ENCODE measurements at regions of chr2 and their contacts with region 1.

Region 1: DNA sequence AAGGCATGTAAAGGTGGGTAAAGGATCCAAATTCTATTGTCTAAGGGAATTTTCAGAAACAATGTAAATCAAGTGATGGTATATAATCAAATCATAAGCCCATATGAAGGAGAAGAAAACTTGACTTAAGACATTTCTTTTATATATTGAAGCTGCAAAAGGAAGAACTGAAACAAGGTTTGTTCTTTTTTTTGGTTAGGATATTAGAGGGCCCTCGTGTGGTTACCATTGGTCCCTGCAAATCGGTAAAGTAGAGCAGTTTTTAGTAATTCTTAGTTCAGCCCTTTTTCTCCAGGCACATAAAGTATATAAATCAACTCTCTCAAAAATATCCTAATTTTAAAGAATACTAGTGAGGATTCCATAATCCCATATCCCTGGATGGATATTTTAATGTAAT is 105.6 kb upstream of the STK17B start:
- DNase-seq: no peak
- ATAC-seq: peak; percentile 70
- H3K4me3 ChIP-seq: no peak overlapping the region
- H3K27ac ChIP-seq: no peak overlapping the region
- H3K4me1 ChIP-seq: no peaks in the 10 kb centered on the region
- H3K27me3 ChIP-seq: no peaks in the 10 kb centered on the region
- CTCF ChIP-seq: peak; percentile 65 to 74 (median 66); a peak in 5 of 6 replicates
- POLR2A ChIP-seq: no peak
- RAD21 ChIP-seq: peak; percentile 81

Region 2: GRCh38 chr2:195117011-195117410 is 1160.0 kb before region 1 on chr2:
- CTCF ChIA-PET with region 1: no interaction called
- POLR2A ChIA-PET with region 1: no interaction called
- RAD21 ChIA-PET with region 1: no interaction called
- intact Hi-C with region 1: no loop called
- DNase-seq: no peak
- ATAC-seq: no peak
- H3K4me3 ChIP-seq: no peak overlapping the region
- H3K27ac ChIP-seq: no peak overlapping the region
- H3K4me1 ChIP-seq: no peaks in the 10 kb centered on the region
- H3K27me3 ChIP-seq: no peaks in the 10 kb centered on the region
- CTCF ChIP-seq: no peak
- POLR2A ChIP-seq: no peak
- RAD21 ChIP-seq: no peak

Region 3: GRCh38 chr2:195559431-195559914 is 717.5 kb before region 1 on chr2:
- CTCF ChIA-PET with region 1: no interaction called
- POLR2A ChIA-PET with region 1: no interaction called
- RAD21 ChIA-PET with region 1: no interaction called
- intact Hi-C with region 1: no loop called
- DNase-seq: no peak
- ATAC-seq: no peak
- H3K4me3 ChIP-seq: no peak overlapping the region
- H3K27ac ChIP-seq: no peak overlapping the region
- H3K4me1 ChIP-seq: no peaks in the 10 kb centered on the region
- H3K27me3 ChIP-seq: no peaks in the 10 kb centered on the region
- CTCF ChIP-seq: no peak
- POLR2A ChIP-seq: no peak
- RAD21 ChIP-seq: no peak

Region 4: GRCh38 chr2:195903956-195904355 is 373.0 kb before region 1 on chr2:
- CTCF ChIA-PET with region 1: no interaction called
- POLR2A ChIA-PET with region 1: no interaction called
- RAD21 ChIA-PET with region 1: no interaction called
- intact Hi-C with region 1: loop called (anchors 10 kb)
- DNase-seq: no peak
- ATAC-seq: no peak
- H3K4me3 ChIP-seq: no peak overlapping the region
- H3K27ac ChIP-seq: no peak overlapping the region
- H3K4me1 ChIP-seq: no peaks in the 10 kb centered on the region; a peak in 1 of 4 replicates
- H3K27me3 ChIP-seq: no peaks in the 10 kb centered on the region
- CTCF ChIP-seq: no peak
- POLR2A ChIP-seq: no peak
- RAD21 ChIP-seq: no peak

Region 5: GRCh38 chr2:196171248-196171871 is 105.6 kb before region 1 on chr2 and contains the start of gene STK17B:
- CTCF ChIA-PET with region 1: no interaction called
- POLR2A ChIA-PET with region 1: no interaction called
- RAD21 ChIA-PET with region 1: interaction called in 1 of 2 experiments, 3 read pairs
- intact Hi-C with region 1: loop called (anchors 2 kb)
- DNase-seq: peak; percentile 88
- ATAC-seq: peak; percentile 92
- H3K4me3 ChIP-seq: peak within 1 kb of the TSS; percentile 78 to 91
- H3K27ac ChIP-seq: peak within 1 kb of the TSS; percentile 70
- H3K4me1 ChIP-seq: peaks cover 4 to 26% of the 10 kb centered on the region in 2 experiments
- H3K27me3 ChIP-seq: 0 out of 2 replicates have a peak, but pooled peaks cover 5% of the 10 kb centered on the region
- CTCF ChIP-seq: no peak
- POLR2A ChIP-seq: peak; percentile 96
- RAD21 ChIP-seq: peak; percentile 19; the same call in 1 of the 2 replicates
- total RNA-seq, gene STK17B: 16.9 TPM

Region 6: DNA sequence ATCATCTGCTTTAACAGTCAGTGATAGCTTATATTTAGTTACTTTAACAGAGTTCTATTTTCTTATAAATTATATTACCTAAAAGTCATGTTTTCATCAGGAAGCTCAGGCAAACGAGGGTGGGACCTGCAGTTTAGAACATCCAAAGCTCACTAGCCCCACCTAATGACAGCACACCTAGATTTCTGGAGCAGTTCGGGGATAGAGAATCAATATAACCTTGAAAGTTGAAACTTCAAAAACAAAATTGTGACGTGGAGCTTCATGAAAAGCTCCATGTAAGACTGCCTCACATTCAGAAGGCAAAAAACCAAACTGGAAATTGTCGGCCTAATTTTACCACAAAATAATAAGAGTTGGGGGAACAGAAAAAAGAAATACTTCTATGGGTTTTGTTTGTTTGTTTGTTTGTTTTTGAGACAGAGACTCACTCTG is 176.6 kb after region 1 on chr2:
- CTCF ChIA-PET with region 1: interaction called, 10 read pairs
- POLR2A ChIA-PET with region 1: no interaction called
- RAD21 ChIA-PET with region 1: no interaction called
- intact Hi-C with region 1: no loop called
- DNase-seq: peak; percentile 60
- ATAC-seq: peak; percentile 97
- H3K4me3 ChIP-seq: no peak overlapping the region
- H3K27ac ChIP-seq: no peak overlapping the region
- H3K4me1 ChIP-seq: no peaks in the 10 kb centered on the region
- H3K27me3 ChIP-seq: no peaks in the 10 kb centered on the region
- CTCF ChIP-seq: peak; percentile 63 to 68 (median 67); a peak in 5 of 6 replicates
- POLR2A ChIP-seq: no peak
- RAD21 ChIP-seq: peak; percentile 84